Mammary epithelial cell (primary cell): ENCODE measurements at regions of chr1 and their contacts with region 1.

Region 1: GRCh38 chr1:162040681-162041080 is 17.0 kb upstream of the OLFML2B start:
- DNase-seq: peak; percentile 43
- H3K4me3 ChIP-seq: no peak overlapping the region
- H3K27ac ChIP-seq: no peak overlapping the region
- H3K4me1 ChIP-seq: peaks cover 7% of the 10 kb centered on the region
- H3K27me3 ChIP-seq: no peaks in the 10 kb centered on the region
- CTCF ChIP-seq: peak; percentile 56 to 61

Region 2: GRCh38 chr1:161766102-161766981 is 274.3 kb before region 1 on chr1 and contains the start of gene ATF6:
- CTCF ChIA-PET with region 1: interaction called, 13 read pairs
- dilution Hi-C with region 1: no loop called
- in situ Hi-C with region 1: no loop called
- intact Hi-C with region 1: loop called (anchors 1 kb)
- DNase-seq: peak; percentile 93
- H3K4me3 ChIP-seq: peak within 1 kb of the TSS; percentile 61 to 94 (median 87)
- H3K27ac ChIP-seq: peak within 1 kb of the TSS; percentile 99
- H3K4me1 ChIP-seq: peaks cover 9% of the 10 kb centered on the region
- H3K27me3 ChIP-seq: no peaks in the 10 kb centered on the region
- CTCF ChIP-seq: no peak
- total RNA-seq, gene ATF6: 21.9 to 32.7 TPM

Region 3: GRCh38 chr1:161792740-161793139 is 247.9 kb before region 1 on chr1:
- CTCF ChIA-PET with region 1: interaction called, 60 read pairs
- dilution Hi-C with region 1: no loop called
- in situ Hi-C with region 1: loop called in 1 of 2 experiments (anchors 5 kb)
- intact Hi-C with region 1: loop called (anchors 1 kb)
- DNase-seq: peak; percentile 79
- H3K4me3 ChIP-seq: no peak overlapping the region
- H3K27ac ChIP-seq: peak overlapping the region; percentile 16
- H3K4me1 ChIP-seq: peaks cover 12% of the 10 kb centered on the region
- H3K27me3 ChIP-seq: no peaks in the 10 kb centered on the region
- CTCF ChIP-seq: peak; percentile 44 to 56

Region 4: GRCh38 chr1:161827786-161828185 is 212.9 kb before region 1 on chr1:
- CTCF ChIA-PET with region 1: no interaction called
- dilution Hi-C with region 1: no loop called
- in situ Hi-C with region 1: no loop called
- intact Hi-C with region 1: no loop called
- DNase-seq: peak; percentile 12
- H3K4me3 ChIP-seq: no peak overlapping the region
- H3K27ac ChIP-seq: no peak overlapping the region
- H3K4me1 ChIP-seq: peaks cover 2% of the 10 kb centered on the region
- H3K27me3 ChIP-seq: no peaks in the 10 kb centered on the region
- CTCF ChIP-seq: no peak

Region 5: DNA sequence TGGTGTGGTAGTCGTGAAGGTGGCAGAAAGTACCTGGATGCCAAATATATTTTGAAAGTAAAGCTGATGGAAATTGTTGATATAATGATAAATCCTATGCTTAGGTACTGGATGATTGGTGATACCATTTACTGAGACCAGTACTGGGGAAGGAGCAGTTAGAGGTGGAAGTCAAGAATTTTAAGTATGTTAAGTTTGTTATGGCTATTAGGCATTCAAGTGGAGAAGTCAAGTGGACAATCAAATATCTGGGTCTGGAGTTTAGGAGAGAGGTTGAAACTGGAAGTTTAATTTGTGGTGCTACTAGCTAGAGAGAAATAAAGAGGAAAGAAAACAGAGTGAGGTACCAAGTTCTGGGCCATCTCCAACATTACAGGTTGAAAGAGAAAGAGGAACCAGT is 185.4 kb before region 1 on chr1:
- CTCF ChIA-PET with region 1: interaction called, 11 read pairs
- dilution Hi-C with region 1: no loop called
- in situ Hi-C with region 1: no loop called
- intact Hi-C with region 1: no loop called
- DNase-seq: no peak
- H3K4me3 ChIP-seq: no peak overlapping the region
- H3K27ac ChIP-seq: no peak overlapping the region
- H3K4me1 ChIP-seq: no peaks in the 10 kb centered on the region
- H3K27me3 ChIP-seq: no peaks in the 10 kb centered on the region
- CTCF ChIP-seq: no peak

Region 6: GRCh38 chr1:161864577-161864976 is 176.1 kb before region 1 on chr1:
- CTCF ChIA-PET with region 1: interaction called, 15 read pairs
- dilution Hi-C with region 1: no loop called
- in situ Hi-C with region 1: no loop called
- intact Hi-C with region 1: no loop called
- DNase-seq: no peak
- H3K4me3 ChIP-seq: no peak overlapping the region
- H3K27ac ChIP-seq: no peak overlapping the region
- H3K4me1 ChIP-seq: no peaks in the 10 kb centered on the region
- H3K27me3 ChIP-seq: no peaks in the 10 kb centered on the region
- CTCF ChIP-seq: peak; percentile 6 to 29

Region 7: DNA sequence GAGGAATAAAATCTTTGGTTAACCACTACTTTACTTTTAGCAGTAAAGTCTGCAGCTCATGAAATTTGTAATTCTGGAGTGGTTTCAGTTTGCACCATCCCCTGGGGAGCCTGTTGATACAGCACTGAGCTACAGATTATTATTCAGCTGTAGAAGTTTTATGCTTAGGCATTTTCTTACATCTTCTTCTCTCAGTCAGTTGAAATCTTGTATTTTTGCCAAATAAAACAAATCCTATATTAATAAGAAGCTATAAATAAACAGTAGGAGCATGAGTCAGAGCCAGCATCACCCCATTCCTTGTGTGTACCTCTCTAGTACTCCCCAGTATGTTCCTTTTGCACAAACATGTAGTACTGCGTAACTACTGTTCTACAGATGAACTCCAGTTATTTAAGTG is 155.7 kb before region 1 on chr1:
- CTCF ChIA-PET with region 1: no interaction called
- dilution Hi-C with region 1: no loop called
- in situ Hi-C with region 1: no loop called
- intact Hi-C with region 1: no loop called
- DNase-seq: peak; percentile 79
- H3K4me3 ChIP-seq: no peak overlapping the region
- H3K27ac ChIP-seq: no peak overlapping the region
- H3K4me1 ChIP-seq: peaks cover 13% of the 10 kb centered on the region
- H3K27me3 ChIP-seq: no peaks in the 10 kb centered on the region
- CTCF ChIP-seq: no peak

Region 8: GRCh38 chr1:161994175-161994668 is 46.5 kb before region 1 on chr1:
- CTCF ChIA-PET with region 1: no interaction called
- dilution Hi-C with region 1: loop called (anchors 5 kb)
- in situ Hi-C with region 1: no loop called
- intact Hi-C with region 1: no loop called
- DNase-seq: no peak
- H3K4me3 ChIP-seq: no peak overlapping the region
- H3K27ac ChIP-seq: no peak overlapping the region
- H3K4me1 ChIP-seq: no peaks in the 10 kb centered on the region
- H3K27me3 ChIP-seq: peaks cover 10% of the 10 kb centered on the region
- CTCF ChIP-seq: no peak

Region 9: DNA sequence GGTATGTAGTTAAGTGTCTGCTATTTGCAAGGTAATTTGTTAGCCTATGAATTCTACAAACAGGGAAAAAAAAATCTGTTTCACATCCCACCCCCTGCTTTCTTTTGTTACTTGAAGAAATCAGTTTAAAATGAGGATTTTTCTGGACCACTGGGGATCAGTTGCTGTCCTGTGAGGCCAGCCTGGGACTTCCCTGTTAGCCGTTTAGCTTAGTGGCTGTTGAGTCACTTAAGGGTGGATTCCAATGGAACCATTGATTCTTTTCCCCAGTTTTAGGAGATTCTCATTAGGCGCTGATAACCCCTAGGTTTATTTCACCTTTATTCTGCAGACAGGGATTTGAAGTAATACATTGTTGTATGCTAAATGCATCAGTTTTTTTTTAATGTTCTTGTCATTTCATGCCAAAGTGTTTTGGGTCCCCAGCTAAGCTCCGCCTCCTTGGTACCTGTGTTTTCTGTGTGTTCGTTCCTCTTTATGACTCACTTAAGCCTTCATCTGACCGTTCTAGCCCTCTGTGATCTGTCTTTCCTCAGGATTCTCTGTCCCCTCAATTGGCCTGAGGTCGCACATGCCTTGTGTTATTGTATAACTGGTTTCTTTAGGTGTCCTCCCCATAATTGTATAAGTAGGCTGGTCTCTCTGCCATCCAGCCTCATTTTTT is 88.1 kb after region 1 on chr1:
- CTCF ChIA-PET with region 1: no interaction called
- dilution Hi-C with region 1: no loop called
- in situ Hi-C with region 1: no loop called
- intact Hi-C with region 1: no loop called
- DNase-seq: no peak
- H3K4me3 ChIP-seq: no peak overlapping the region
- H3K27ac ChIP-seq: no peak overlapping the region
- H3K4me1 ChIP-seq: no peaks in the 10 kb centered on the region
- H3K27me3 ChIP-seq: no peaks in the 10 kb centered on the region
- CTCF ChIP-seq: no peak

Region 10: DNA sequence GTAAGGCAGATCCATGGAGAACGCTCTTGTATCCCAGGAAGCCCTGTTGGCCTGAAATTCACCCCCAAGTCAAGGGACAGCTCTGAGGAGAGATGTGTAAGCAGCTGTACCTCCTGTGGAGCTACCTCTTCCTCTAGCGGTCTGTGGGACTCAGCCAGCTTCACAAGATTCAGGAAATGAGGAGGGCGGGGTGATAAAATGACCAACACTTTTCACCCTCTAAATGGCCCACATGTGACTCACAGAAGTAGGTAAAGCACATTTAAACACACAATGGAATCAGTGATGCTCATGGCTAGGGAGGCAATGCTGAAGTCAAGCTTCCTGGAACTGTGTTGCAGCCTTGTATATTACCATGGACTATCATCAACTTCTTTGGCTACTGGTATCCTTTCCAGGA is 371.3 kb after region 1 on chr1 and contains the start of gene SH2D1B:
- CTCF ChIA-PET with region 1: no interaction called
- dilution Hi-C with region 1: loop called (anchors 10 kb)
- in situ Hi-C with region 1: no loop called
- intact Hi-C with region 1: no loop called
- DNase-seq: peak; percentile 54
- H3K4me3 ChIP-seq: no peak within 1 kb of the TSS
- H3K27ac ChIP-seq: no peak within 1 kb of the TSS
- H3K4me1 ChIP-seq: peaks cover 6% of the 10 kb centered on the region
- H3K27me3 ChIP-seq: no peaks in the 10 kb centered on the region
- CTCF ChIP-seq: no peak
- total RNA-seq, gene SH2D1B: not detected